ENCODE measurements at regions of chr3 and their contacts with region 1.

Region 1: GRCh38 chr3:183635431-183636220 is at the start of gene KLHL24:
- DNase-seq: peak; percentile 95
- ATAC-seq: peak; percentile 85
- H3K4me3 Mint-ChIP-seq: peak within 1 kb of the TSS; percentile 87
- H3K27ac Mint-ChIP-seq: peak within 1 kb of the TSS; percentile 92
- H3K4me1 Mint-ChIP-seq: peaks cover 36% of the 10 kb centered on the region
- H3K27me3 Mint-ChIP-seq: no peaks in the 10 kb centered on the region
- total RNA-seq, gene KLHL24: 9.6 to 15.8 TPM

Region 2: DNA sequence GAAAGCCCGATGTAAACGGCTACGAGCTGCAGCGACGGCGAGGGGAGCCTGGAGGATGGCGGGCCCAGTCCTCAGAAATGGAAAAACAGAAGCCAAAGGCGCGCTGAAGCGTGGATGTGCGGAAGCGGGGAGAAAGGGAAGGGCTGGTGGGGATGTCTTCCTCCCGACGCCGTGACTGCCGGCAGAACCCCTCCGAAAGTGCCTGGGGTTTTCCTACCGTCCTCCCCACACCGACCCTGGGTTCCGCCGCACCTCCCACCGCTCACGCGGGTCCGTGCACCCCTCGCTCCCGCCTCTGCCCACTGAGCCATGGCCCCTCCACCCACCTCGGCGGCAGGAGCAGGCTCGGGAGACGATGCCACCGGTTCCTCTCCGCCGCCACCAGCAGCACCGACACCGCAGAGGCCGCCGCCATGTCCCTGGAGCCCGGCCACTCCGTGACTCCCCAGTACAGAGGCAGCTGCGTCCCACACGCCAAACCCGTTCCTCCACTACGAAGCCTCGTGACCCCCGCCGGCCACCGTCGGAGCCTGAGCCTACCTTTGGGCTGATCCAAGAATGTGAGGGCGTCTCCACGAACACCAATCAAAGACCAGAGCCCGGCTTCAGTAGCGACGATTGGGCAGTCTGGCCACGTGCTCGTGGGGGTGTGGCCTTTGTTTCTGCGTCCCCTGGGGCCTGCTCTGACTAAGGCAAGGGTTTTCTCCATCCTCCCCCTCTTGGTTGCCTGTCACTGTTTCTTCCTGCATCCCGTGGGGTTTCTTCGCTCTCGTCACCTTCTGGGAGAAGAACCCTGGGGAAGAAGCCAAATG is 536.4 kb before region 1 on chr3 and contains the start of gene MCCC1:
- CTCF ChIA-PET with region 1: no interaction called
- POLR2A ChIA-PET with region 1: no interaction called
- intact Hi-C with region 1: loop called in 1 of 2 experiments (anchors 1 kb)
- DNase-seq: peak; percentile 99
- ATAC-seq: peak; percentile 99
- H3K4me3 Mint-ChIP-seq: peak within 1 kb of the TSS; percentile 91
- H3K27ac Mint-ChIP-seq: peak within 1 kb of the TSS; percentile 99
- H3K4me1 Mint-ChIP-seq: peaks cover 33% of the 10 kb centered on the region
- H3K27me3 Mint-ChIP-seq: no peaks in the 10 kb centered on the region
- total RNA-seq, gene MCCC1: 22.0 to 31.1 TPM

Region 3: GRCh38 chr3:183201960-183202722 is 433.5 kb before region 1 on chr3:
- CTCF ChIA-PET with region 1: no interaction called
- POLR2A ChIA-PET with region 1: no interaction called
- intact Hi-C with region 1: no loop called
- DNase-seq: peak; percentile 50
- ATAC-seq: peak; percentile 97
- H3K4me3 Mint-ChIP-seq: no peak overlapping the region
- H3K27ac Mint-ChIP-seq: peak overlapping the region; percentile 25
- H3K4me1 Mint-ChIP-seq: peaks cover 27% of the 10 kb centered on the region
- H3K27me3 Mint-ChIP-seq: no peaks in the 10 kb centered on the region

Region 4: DNA sequence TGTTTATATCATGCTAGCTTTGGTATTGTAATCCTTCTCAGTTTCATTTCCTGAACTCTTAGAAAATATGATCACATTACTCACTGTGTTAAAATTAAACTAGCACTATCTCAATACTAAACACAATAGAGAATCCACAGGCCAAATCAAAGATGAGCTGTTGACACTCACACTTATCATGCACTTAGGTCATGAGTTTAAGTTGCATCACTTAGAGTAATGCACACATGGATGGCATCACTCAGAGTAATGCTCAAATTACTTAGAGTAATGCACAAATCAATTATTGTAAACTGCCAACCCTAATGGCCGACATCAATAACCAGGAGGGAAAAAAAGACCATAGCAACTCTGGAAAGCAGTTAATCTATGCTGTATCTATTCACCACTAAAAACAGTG is 167.2 kb before region 1 on chr3:
- CTCF ChIA-PET with region 1: interaction called, 4 read pairs
- POLR2A ChIA-PET with region 1: no interaction called
- intact Hi-C with region 1: loop called (anchors 1 to 2 kb)
- DNase-seq: no peak
- ATAC-seq: peak; percentile 77
- H3K4me3 Mint-ChIP-seq: no peak overlapping the region
- H3K27ac Mint-ChIP-seq: peak overlapping the region; percentile 84
- H3K4me1 Mint-ChIP-seq: peaks cover 26% of the 10 kb centered on the region
- H3K27me3 Mint-ChIP-seq: no peaks in the 10 kb centered on the region

Region 5: GRCh38 chr3:183745300-183746098 is 109.9 kb after region 1 on chr3:
- CTCF ChIA-PET with region 1: no interaction called
- POLR2A ChIA-PET with region 1: no interaction called
- intact Hi-C with region 1: no loop called
- DNase-seq: no peak
- ATAC-seq: no peak
- H3K4me3 Mint-ChIP-seq: no peak overlapping the region
- H3K27ac Mint-ChIP-seq: no peak overlapping the region
- H3K4me1 Mint-ChIP-seq: no peaks in the 10 kb centered on the region
- H3K27me3 Mint-ChIP-seq: no peaks in the 10 kb centered on the region

Region 6: DNA sequence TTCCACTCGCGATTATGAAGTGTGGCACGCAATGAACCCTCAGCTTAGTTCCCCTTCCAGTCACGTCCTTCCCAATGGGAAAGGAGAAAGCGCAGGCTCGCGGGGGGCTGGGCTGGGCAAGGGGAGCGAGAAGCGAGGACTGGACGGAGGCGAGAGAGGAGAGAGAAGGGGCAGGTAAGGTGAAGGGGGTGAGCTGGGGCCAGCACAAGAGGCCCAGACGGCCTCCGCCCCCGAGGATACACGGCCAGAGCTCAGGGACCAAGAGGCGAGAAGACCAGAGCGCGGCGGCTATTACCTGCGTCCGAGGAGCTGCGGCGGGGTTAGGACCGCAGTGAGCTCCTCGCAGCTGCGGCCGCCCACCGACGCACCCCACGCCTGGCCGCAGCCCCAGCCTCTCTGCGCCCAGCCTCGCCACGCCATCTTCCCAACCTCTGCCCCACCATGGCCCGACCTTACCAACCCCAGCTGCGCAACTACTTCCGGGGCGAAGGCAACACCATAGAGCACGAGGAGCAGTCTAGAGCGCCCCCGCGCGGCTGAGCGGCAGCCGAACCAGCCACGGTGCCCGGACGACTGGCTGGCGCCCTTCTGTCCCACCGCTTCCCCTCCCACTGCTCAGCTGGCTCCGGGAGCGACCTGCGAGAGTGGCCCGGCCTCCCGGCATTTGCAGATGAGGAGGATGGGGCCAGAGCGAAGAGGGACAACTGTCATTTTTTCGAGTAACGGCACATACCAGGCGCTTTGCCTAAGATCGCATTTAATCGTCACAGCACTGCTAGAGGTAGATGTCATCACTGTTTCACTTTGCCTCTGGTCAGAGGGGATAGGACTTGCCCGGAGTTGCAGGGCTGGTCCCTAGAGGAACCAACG is 249.0 kb after region 1 on chr3 and contains the start of gene PARL:
- CTCF ChIA-PET with region 1: no interaction called
- POLR2A ChIA-PET with region 1: no interaction called
- intact Hi-C with region 1: loop called in 1 of 2 experiments (anchors 1 kb)
- DNase-seq: peak; percentile 98
- ATAC-seq: peak; percentile 100
- H3K4me3 Mint-ChIP-seq: peak within 1 kb of the TSS; percentile 94
- H3K27ac Mint-ChIP-seq: peak within 1 kb of the TSS; percentile 94
- H3K4me1 Mint-ChIP-seq: peaks cover 32% of the 10 kb centered on the region
- H3K27me3 Mint-ChIP-seq: no peaks in the 10 kb centered on the region
- total RNA-seq, gene PARL: 55.9 to 91.9 TPM

Region 7: DNA sequence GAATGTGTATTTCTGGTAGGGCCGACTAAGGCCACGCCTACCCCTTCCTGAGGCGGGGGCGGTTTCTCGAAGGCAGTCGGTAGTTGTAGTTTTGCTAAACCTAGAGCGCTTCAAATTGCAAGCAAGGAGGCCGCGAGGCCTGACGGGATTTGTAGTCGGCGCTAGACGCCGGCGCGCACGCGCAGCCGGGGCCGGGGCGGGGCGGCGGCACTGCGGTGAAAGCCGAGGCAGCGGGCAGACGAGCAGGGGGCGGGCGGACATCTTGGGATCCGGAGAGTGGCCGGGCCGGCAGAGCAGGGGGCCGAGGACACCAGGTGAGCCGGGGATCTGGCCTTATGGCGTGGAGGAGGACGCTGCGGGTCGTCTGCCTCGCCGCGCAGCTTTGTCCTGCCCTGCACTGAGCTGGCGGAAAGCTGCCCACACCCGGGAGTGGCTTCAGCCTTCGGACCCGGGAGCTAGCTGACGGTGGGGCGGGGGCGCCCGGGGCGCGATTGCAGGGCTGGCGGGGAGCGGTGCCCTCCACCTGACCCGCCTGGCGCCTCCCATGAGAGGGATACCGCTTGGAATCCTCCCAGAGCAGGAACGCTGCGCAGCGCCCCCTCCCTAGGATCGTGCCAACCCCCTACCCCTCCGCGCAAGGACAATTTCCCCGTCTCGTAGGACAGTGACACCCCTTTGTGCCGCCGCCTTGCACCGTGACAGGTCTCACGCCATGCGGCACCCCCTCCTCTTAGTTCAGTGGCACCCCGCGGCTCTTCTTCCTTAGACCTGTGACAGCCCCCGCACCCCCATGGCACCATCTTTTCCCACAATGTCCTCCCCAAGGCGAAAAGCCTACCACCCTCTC is 539.2 kb after region 1 on chr3 and contains the start of gene AP2M1:
- CTCF ChIA-PET with region 1: no interaction called
- POLR2A ChIA-PET with region 1: no interaction called
- intact Hi-C with region 1: loop called in 1 of 2 experiments (anchors 1 kb)
- DNase-seq: peak; percentile 98
- ATAC-seq: peak; percentile 97
- H3K4me3 Mint-ChIP-seq: peak within 1 kb of the TSS; percentile 95
- H3K27ac Mint-ChIP-seq: peak within 1 kb of the TSS; percentile 89
- H3K4me1 Mint-ChIP-seq: peaks cover 23% of the 10 kb centered on the region
- H3K27me3 Mint-ChIP-seq: no peaks in the 10 kb centered on the region
- total RNA-seq, gene AP2M1: 192 to 204 TPM

Region 8: GRCh38 chr3:184314363-184314699 is 678.7 kb after region 1 on chr3 and contains the start of gene EIF4G1:
- CTCF ChIA-PET with region 1: no interaction called
- POLR2A ChIA-PET with region 1: no interaction called
- intact Hi-C with region 1: loop called in 1 of 2 experiments (anchors 5 kb)
- DNase-seq: peak; percentile 96
- ATAC-seq: peak; percentile 89
- H3K4me3 Mint-ChIP-seq: peak within 1 kb of the TSS; percentile 84
- H3K27ac Mint-ChIP-seq: peak within 1 kb of the TSS; percentile 90
- H3K4me1 Mint-ChIP-seq: peaks cover 29% of the 10 kb centered on the region
- H3K27me3 Mint-ChIP-seq: no peaks in the 10 kb centered on the region
- total RNA-seq, gene EIF4G1: 479 to 556 TPM